ENCODE measurements at regions of chr16 and their contacts with region 1.

Region 1: GRCh38 chr16:69611103-69611640 is 45.4 kb downstream of the NFAT5 start:
- DNase-seq: no peak
- CTCF ChIP-seq: no peak

Region 2: GRCh38 chr16:69339289-69340108 is 271.7 kb before region 1 on chr16 and contains the starts of genes COG8 and NIP7:
- CTCF ChIA-PET with region 1: no interaction called
- POLR2A ChIA-PET with region 1: no interaction called
- DNase-seq: peak; percentile 96
- CTCF ChIP-seq: peak; percentile 77

Region 3: DNA sequence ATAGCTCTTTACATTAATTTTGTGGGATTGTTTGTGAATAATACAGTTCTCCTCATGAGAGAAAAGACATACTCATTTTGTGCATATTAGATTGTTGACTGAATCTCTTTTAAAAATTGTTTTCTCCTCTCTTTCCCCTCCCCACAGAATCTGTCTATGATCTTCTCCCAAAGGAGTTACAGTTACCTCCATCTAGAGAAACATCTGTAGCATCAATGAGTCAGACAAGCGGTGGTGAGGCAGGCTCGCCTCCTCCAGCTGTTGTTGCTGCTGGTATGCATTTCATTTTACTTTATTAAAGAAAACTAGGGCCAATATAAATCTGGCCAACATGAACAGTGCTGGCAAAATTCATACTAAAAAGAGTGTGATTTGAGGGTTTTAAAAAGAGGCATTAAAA is 15.1 kb after region 1 on chr16:
- CTCF ChIA-PET with region 1: interaction called, 10 read pairs
- POLR2A ChIA-PET with region 1: no interaction called
- DNase-seq: no peak
- CTCF ChIP-seq: no peak

Region 4: GRCh38 chr16:69833357-69834282 is 222.4 kb after region 1 on chr16:
- CTCF ChIA-PET with region 1: no interaction called
- POLR2A ChIA-PET with region 1: no interaction called
- DNase-seq: no peak
- CTCF ChIP-seq: no peak

Measured in GM10248 (cell line).